ENCODE measurements at regions of chr19 and their contacts with region 1.

Region 1: DNA sequence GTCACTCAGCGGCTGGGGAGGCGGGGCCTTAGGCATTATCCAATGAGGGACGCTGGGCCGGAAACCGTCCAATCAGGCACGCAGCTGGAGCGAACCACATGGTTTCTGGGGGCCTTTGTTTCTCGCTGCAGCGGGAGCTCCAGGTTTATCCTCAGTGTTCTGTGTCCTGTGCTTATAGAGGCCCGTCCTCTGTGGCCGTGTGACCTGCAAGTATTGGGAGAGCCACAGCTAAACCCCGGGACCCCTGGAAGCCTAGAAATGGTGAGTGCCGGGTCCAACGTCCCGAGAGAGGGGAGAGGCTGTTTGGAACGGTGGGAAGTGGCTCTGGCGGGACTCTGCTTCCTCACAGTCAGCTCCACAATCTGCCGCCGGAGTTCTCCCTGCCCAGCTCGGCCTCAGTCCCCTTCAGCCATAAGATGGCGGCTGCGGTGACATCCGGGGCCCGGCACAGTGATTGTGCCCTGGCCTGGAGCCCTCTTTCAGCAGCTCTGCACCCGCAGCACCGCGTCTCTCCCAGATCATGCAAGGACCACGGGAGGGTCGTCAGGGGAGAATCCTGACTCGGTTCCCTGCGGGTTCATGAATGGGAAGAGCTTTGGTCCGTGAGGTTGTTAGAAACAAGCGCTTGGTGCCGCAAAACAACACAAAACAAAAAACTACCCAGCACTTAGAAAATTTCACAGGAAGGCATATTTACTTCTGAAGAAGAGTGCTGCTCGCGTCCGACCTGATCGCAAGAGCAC is at the start of gene ZNF253:
- DNase-seq: peak; percentile 98
- H3K4me3 ChIP-seq: peak within 1 kb of the TSS; percentile 52 to 81 (median 71)
- H3K27ac ChIP-seq: peak within 1 kb of the TSS; percentile 89 to 96 (median 90)
- H3K4me1 ChIP-seq: peaks cover 0 to 28% (median 20%) of the 10 kb centered on the region in 4 donors
- H3K27me3 ChIP-seq: peaks cover 0 to 2% (median 0%) of the 10 kb centered on the region in 3 donors
- CTCF ChIP-seq: no peak
- EP300 ChIP-seq: no peak
- POLR2A ChIP-seq: peak; percentile 83 to 88
- total RNA-seq, gene ZNF253: 2.4 to 11.6 (median 7.3) TPM

Region 2: GRCh38 chr19:19732579-19733501 is 133.1 kb before region 1 on chr19 and contains the start of gene ZNF14:
- intact Hi-C with region 1: loop called (anchors 10 kb)
- DNase-seq: peak; percentile 97
- H3K4me3 ChIP-seq: peak within 1 kb of the TSS; percentile 72 to 85 (median 80)
- H3K27ac ChIP-seq: peak within 1 kb of the TSS; percentile 74 to 80 (median 78)
- H3K4me1 ChIP-seq: peaks cover 0 to 12% (median 10%) of the 10 kb centered on the region in 4 donors
- H3K27me3 ChIP-seq: no peaks in the 10 kb centered on the region
- CTCF ChIP-seq: peak in 1 of 4 experiments; percentile 10
- EP300 ChIP-seq: no peak
- POLR2A ChIP-seq: peak; percentile 70 to 72
- total RNA-seq, gene ZNF14: 7.8 to 14.5 (median 9.5) TPM

Region 3: GRCh38 chr19:19776041-19777008 is 89.6 kb before region 1 on chr19:
- intact Hi-C with region 1: loop called (anchors 1 kb)
- DNase-seq: peak; percentile 99
- H3K4me3 ChIP-seq: peak overlapping the region; percentile 56 to 75 (median 70)
- H3K27ac ChIP-seq: peak overlapping the region; percentile 70 to 79 (median 76)
- H3K4me1 ChIP-seq: peaks cover 0 to 24% (median 18%) of the 10 kb centered on the region in 4 donors
- H3K27me3 ChIP-seq: no peaks in the 10 kb centered on the region
- CTCF ChIP-seq: no peak
- EP300 ChIP-seq: no peak
- POLR2A ChIP-seq: no peak

Region 4: DNA sequence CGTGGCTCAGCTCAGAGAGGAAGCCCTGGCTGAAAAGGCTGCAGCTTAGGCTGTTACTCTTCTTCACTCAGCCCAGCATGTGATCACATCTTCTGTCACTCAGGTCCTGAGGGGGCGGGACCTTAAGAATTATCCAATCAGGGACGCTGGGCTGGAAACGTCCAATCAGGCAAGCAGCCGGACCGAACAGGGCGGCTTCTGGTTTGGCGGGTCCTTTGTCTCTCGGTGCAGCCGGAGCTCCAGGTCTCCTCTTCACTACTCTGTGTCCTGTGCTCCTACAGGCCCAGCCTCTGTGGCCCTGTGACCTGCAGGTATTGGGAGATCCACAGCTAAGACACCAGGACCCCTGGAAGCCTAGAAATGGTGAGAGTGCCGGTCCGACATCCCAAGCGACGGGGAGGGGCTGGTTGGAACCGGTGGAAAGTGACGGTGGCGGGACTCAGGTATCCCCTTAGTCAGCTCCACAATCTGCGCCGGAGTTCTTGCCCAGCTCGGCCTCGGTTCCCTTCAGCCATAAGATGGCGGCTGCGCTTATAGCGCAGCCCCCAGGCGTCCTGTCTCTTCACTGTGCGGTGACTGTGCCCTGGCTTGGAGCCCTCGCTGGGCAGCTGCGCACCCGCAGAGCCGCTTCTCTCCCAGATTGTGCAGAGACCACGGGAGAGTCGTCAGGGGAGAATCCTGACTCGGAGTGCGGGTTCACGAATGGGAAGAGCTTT is 35.0 kb after region 1 on chr19 and contains the start of gene ZNF93:
- intact Hi-C with region 1: loop called (anchors 1 kb)
- DNase-seq: peak; percentile 98
- H3K4me3 ChIP-seq: peak within 1 kb of the TSS; percentile 54 to 85 (median 69)
- H3K27ac ChIP-seq: peak within 1 kb of the TSS; percentile 83 to 99 (median 88)
- H3K4me1 ChIP-seq: peaks cover 0 to 23% (median 6%) of the 10 kb centered on the region in 4 donors
- H3K27me3 ChIP-seq: no peaks in the 10 kb centered on the region
- CTCF ChIP-seq: no peak
- EP300 ChIP-seq: no peak
- POLR2A ChIP-seq: peak; percentile 27 to 63
- total RNA-seq, gene ZNF93: 5.1 to 14.4 (median 6.7) TPM

Region 5: DNA sequence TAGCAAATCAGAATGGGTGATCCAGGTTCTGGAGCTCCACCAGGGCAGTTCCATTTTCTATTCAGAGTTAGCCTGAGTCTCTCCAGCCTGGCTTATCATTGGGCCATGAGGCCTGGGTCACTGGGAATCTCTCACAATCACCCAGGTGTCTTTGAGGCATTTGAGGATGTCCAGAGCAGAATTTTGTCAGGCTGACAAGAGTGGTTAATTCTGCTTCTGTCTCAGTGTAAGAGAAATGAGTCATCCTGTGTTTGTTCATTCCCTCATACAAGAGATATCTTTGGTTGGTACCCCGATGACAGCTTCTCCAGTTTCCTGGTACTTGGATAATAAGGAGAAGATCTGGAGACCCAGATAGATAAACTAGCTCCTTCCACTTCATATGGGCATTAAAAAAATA is 45.2 kb after region 1 on chr19:
- intact Hi-C with region 1: no loop called
- DNase-seq: no peak
- H3K4me3 ChIP-seq: no peak overlapping the region
- H3K27ac ChIP-seq: peak overlapping the region in 1 of 4 donors; percentile 2
- H3K4me1 ChIP-seq: peaks cover 0 to 7% (median 2%) of the 10 kb centered on the region in 4 donors
- H3K27me3 ChIP-seq: no peaks in the 10 kb centered on the region
- CTCF ChIP-seq: no peak
- EP300 ChIP-seq: no peak
- POLR2A ChIP-seq: no peak

Measured in sigmoid colon (tissue), 7 donors.